ENCODE measurements at regions of chr11 and their contacts with region 1.

Region 1: DNA sequence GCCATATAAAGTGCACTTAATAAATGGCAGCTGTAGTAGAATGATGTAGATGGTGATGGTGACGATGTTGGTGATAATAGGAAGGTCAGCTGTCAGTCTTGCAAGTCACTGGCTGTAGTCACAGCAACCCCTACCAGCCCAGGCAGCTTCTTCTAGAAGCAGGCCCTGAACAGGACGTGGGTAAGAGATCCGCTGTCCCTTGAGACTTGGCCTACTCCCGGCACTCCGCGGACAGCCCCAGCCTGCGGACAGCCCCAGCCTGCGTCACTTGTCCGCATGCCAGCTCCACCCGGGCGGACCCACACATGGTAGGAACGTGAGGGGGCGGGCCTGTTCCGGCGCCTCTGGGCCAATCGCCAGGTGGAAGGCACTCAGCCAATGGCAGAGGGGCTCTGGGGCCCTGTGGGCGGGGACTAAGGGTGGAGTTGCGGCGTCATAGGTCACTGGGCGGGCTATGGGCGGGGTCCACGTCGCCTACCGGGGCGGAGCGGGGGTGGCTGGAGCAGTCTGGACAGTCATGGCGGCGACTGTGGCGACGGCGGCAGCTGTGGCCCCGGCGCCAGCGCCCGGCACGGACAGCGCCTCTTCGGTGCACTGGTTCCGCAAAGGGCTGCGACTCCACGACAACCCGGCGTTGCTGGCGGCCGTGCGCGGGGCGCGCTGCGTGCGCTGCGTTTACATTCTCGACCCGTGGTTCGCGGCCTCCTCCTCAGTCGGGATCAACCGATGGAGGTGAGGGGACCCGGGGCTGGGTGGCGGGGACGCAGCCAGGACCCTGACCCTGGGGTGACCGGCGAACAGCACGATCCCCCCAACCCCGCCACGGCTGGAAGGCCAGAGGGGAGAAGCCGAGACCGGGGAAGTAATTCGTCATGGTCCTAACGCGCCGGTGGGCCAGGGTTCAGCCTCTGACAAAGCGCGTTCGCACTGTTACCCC is at the start of gene CRY2:
- DNase-seq: peak; percentile 88 to 100
- H3K4me3 ChIP-seq: peak within 1 kb of the TSS; percentile 91
- H3K27ac ChIP-seq: peak within 1 kb of the TSS; percentile 30; the same call in 1 of the 2 replicates
- H3K4me1 ChIP-seq: peaks cover 18% of the 10 kb centered on the region
- H3K27me3 ChIP-seq: no peaks in the 10 kb centered on the region
- CTCF ChIP-seq: no peak
- total RNA-seq, gene CRY2: 17.5 and 27.3 TPM in 2 replicates

Region 2: DNA sequence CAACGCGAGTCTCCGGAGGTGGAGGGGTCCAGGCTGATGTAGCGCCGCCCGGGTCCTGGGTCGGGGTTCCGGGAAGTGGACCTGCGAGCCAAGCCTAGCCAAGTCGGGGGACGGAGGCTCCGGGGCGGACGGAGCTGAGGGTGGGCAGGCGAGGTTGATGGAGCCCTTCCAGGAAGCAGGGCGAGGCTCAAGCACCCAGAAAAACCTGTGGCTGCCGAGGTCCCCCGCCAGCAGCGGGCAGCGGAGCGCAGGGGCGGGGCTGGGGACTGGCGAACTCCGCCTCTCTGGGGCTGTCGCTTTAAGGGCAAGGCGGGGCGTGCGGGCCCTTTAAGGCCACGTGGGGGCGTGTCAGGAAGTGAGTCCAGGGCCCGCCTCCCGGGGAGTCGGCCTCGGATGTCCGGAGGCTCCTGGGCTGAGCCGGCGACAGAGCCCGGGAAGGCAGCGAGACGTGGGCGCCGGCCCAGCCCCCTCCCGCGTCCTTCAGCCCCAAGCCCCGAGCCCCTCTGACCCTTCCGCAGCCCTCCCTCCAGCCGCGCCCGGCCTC is 42.4 kb before region 1 on chr11 and contains the start of gene SLC35C1:
- CTCF ChIA-PET with region 1: no interaction called
- POLR2A ChIA-PET with region 1: interaction called, 3 read pairs
- intact Hi-C with region 1: loop called (anchors 1 kb)
- DNase-seq: peak; percentile 88 to 98
- H3K4me3 ChIP-seq: peak within 1 kb of the TSS; percentile 84
- H3K27ac ChIP-seq: no peak within 1 kb of the TSS
- H3K4me1 ChIP-seq: peaks cover 28% of the 10 kb centered on the region
- H3K27me3 ChIP-seq: no peaks in the 10 kb centered on the region
- CTCF ChIP-seq: peak; percentile 32; the same call in 1 of the 2 replicates
- total RNA-seq, gene SLC35C1: 15.2 and 15.6 TPM in 2 replicates

Region 3: GRCh38 chr11:45917623-45918330 is 70.5 kb after region 1 on chr11 and contains the start of gene PEX16:
- CTCF ChIA-PET with region 1: no interaction called
- POLR2A ChIA-PET with region 1: interaction called, 3 read pairs
- intact Hi-C with region 1: loop called (anchors 5 kb)
- DNase-seq: peak; percentile 98 to 99
- H3K4me3 ChIP-seq: peak within 1 kb of the TSS; percentile 96
- H3K27ac ChIP-seq: peak within 1 kb of the TSS; percentile 51
- H3K4me1 ChIP-seq: peaks cover 9% of the 10 kb centered on the region; the same call in 1 of the 2 replicates
- H3K27me3 ChIP-seq: no peaks in the 10 kb centered on the region
- CTCF ChIP-seq: no peak
- total RNA-seq, gene PEX16: 35.8 and 48.6 TPM in 2 replicates

Region 4: GRCh38 chr11:46050003-46050461 is 202.8 kb after region 1 on chr11:
- CTCF ChIA-PET with region 1: no interaction called
- POLR2A ChIA-PET with region 1: interaction called, 22 read pairs
- intact Hi-C with region 1: no loop called
- DNase-seq: peak in 1 of 2 experiments; percentile 45
- H3K4me3 ChIP-seq: no peak overlapping the region
- H3K27ac ChIP-seq: no peak overlapping the region
- H3K4me1 ChIP-seq: peaks cover 6% of the 10 kb centered on the region; the same call in 1 of the 2 replicates
- H3K27me3 ChIP-seq: no peaks in the 10 kb centered on the region
- CTCF ChIP-seq: no peak